Calu3 (cell line): ENCODE measurements at regions of chrX and their contacts with region 1.

Region 1: GRCh38 chrX:107360788-107361363 is 88.6 kb upstream of the FRMPD3 start:
- DNase-seq: no peak
- H3K4me3 Mint-ChIP-seq: no peak overlapping the region
- H3K27ac Mint-ChIP-seq: no peak overlapping the region
- H3K4me1 Mint-ChIP-seq: no peaks in the 10 kb centered on the region
- H3K27me3 Mint-ChIP-seq: peaks cover 33% of the 10 kb centered on the region
- CTCF ChIP-seq: no peak

Region 2: GRCh38 chrX:107672955-107673378 is 312.1 kb after region 1 on chrX:
- CTCF ChIA-PET with region 1: no interaction called
- intact Hi-C with region 1: no loop called
- DNase-seq: peak; percentile 76
- H3K4me3 Mint-ChIP-seq: no peak overlapping the region
- H3K27ac Mint-ChIP-seq: peak overlapping the region; percentile 63
- H3K4me1 Mint-ChIP-seq: peaks cover 36% of the 10 kb centered on the region
- H3K27me3 Mint-ChIP-seq: no peaks in the 10 kb centered on the region
- CTCF ChIP-seq: peak; percentile 80

Region 3: GRCh38 chrX:108245459-108245858 is 884.6 kb after region 1 on chrX:
- CTCF ChIA-PET with region 1: interaction called, 11 read pairs
- intact Hi-C with region 1: no loop called
- DNase-seq: no peak
- H3K4me3 Mint-ChIP-seq: no peak overlapping the region
- H3K27ac Mint-ChIP-seq: no peak overlapping the region
- H3K4me1 Mint-ChIP-seq: no peaks in the 10 kb centered on the region
- H3K27me3 Mint-ChIP-seq: no peaks in the 10 kb centered on the region
- CTCF ChIP-seq: no peak